ENCODE measurements at regions of chr1 and their contacts with region 1.

Region 1: GRCh38 chr1:116763787-116764465 is 9.7 kb downstream of the CD2 start:
- DNase-seq: peak; percentile 55
- ATAC-seq: peak; percentile 90
- H3K4me3 Mint-ChIP-seq: no peak overlapping the region
- H3K27ac Mint-ChIP-seq: no peak overlapping the region
- H3K4me1 Mint-ChIP-seq: peaks cover 10% of the 10 kb centered on the region
- H3K27me3 Mint-ChIP-seq: no peaks in the 10 kb centered on the region
- CTCF ChIP-seq: peak; percentile 33; the same call in 1 of the 2 replicates

Region 2: DNA sequence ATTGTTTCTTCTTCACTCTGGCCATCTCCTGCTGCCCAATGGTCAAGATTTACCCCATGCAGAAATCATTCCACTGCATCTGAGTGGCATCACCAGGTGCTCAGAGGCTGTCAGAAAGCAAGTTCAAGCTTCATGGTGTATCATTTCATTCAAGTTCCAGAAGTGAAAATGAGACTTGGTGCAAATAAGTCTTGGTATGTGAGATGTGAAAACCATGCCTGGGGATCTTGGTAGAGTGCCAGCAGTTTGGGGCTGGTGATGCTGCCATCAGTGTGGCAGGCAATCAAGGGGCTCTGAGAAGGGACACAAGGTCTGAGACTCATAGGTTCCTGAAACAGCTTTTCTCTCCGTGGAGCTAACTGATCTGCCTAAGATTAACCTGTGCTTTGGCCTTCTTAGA is 42.3 kb after region 1 on chr1:
- CTCF ChIA-PET with region 1: no interaction called
- POLR2A ChIA-PET with region 1: no interaction called
- DNase-seq: no peak
- ATAC-seq: no peak
- H3K4me3 Mint-ChIP-seq: no peak overlapping the region
- H3K27ac Mint-ChIP-seq: no peak overlapping the region
- H3K4me1 Mint-ChIP-seq: peaks cover 18% of the 10 kb centered on the region
- H3K27me3 Mint-ChIP-seq: no peaks in the 10 kb centered on the region
- CTCF ChIP-seq: no peak

Region 3: DNA sequence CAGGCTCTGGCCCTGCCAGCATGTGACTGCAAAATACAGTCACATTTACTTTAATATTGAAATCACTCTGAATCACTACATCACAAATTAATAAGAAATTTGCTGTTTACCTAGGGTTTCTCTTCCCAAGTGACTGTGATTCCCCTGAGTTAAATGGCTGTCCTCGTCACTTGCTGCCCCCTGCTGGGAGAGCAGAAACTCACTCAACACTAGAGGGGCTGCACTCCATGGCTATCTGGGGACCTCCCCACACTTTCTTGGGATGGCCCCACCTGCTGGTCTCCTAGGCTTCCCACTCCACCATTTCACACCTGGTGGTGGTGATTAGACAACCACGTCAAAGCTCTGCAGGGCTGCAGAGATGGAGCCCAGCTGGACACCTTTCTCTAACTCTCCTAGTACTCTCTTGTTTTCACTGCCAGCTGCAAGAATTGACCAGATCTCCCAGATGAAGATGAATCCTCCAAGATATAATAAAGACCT is 53.7 kb after region 1 on chr1:
- CTCF ChIA-PET with region 1: interaction called, 11 read pairs
- POLR2A ChIA-PET with region 1: no interaction called
- DNase-seq: peak; percentile 75
- ATAC-seq: peak; percentile 99
- H3K4me3 Mint-ChIP-seq: no peak overlapping the region
- H3K27ac Mint-ChIP-seq: no peak overlapping the region; the same call in 1 of the 2 replicates
- H3K4me1 Mint-ChIP-seq: peaks cover 9% of the 10 kb centered on the region; the same call in 1 of the 2 replicates
- H3K27me3 Mint-ChIP-seq: peaks cover 2% of the 10 kb centered on the region; the same call in 1 of the 2 replicates
- CTCF ChIP-seq: 0 out of 2 replicates have a peak, but pooled peaks have one; percentile 34

Region 4: GRCh38 chr1:116902032-116902738 is 138.3 kb after region 1 on chr1:
- CTCF ChIA-PET with region 1: no interaction called
- POLR2A ChIA-PET with region 1: no interaction called
- DNase-seq: no peak
- ATAC-seq: no peak
- H3K4me3 Mint-ChIP-seq: no peak overlapping the region
- H3K27ac Mint-ChIP-seq: no peak overlapping the region
- H3K4me1 Mint-ChIP-seq: peaks cover 19% of the 10 kb centered on the region
- H3K27me3 Mint-ChIP-seq: no peaks in the 10 kb centered on the region
- CTCF ChIP-seq: no peak